ENCODE measurements at regions of chr13 and their contacts with region 1.

Region 1: DNA sequence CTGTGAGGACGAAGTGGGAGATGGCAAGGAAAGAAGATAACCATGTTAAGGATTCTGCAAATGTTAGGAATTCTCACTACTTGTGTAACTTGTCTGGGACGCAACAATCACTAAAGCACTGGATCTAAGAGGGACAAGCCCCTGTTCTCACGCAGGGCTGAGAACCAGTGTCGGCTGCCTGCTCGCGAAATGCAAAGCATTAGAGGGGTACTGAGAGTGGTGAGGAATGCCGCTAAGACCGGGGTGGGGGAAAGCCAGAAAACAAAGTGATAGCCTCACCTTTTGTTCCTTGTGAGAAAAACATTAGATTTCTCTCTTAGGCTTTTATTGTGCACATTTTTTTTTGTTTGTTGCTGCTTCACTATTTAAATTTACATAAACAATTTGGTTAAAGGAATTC is 241.9 kb downstream of the ABCC4 start:
- DNase-seq: no peak
- ATAC-seq: no peak
- H3K4me3 ChIP-seq: no peak overlapping the region
- H3K4me3 Mint-ChIP-seq: no peak overlapping the region
- H3K27ac ChIP-seq: no peak overlapping the region
- H3K27ac Mint-ChIP-seq: no peak overlapping the region
- H3K4me1 ChIP-seq: no peaks in the 10 kb centered on the region
- H3K4me1 Mint-ChIP-seq: no peaks in the 10 kb centered on the region
- H3K27me3 ChIP-seq: no peaks in the 10 kb centered on the region
- H3K27me3 Mint-ChIP-seq: no peaks in the 10 kb centered on the region
- CTCF ChIP-seq: no peak

Region 2: GRCh38 chr13:94608586-94608985 is 450.7 kb before region 1 on chr13:
- CTCF ChIA-PET with region 1: no interaction called
- POLR2A ChIA-PET with region 1: no interaction called
- intact Hi-C with region 1: no loop called
- DNase-seq: no peak
- ATAC-seq: no peak
- H3K4me3 ChIP-seq: no peak overlapping the region
- H3K4me3 Mint-ChIP-seq: no peak overlapping the region
- H3K27ac ChIP-seq: no peak overlapping the region
- H3K27ac Mint-ChIP-seq: no peak overlapping the region
- H3K4me1 ChIP-seq: no peaks in the 10 kb centered on the region
- H3K4me1 Mint-ChIP-seq: peaks cover 25% of the 10 kb centered on the region
- H3K27me3 ChIP-seq: no peaks in the 10 kb centered on the region
- H3K27me3 Mint-ChIP-seq: no peaks in the 10 kb centered on the region
- CTCF ChIP-seq: no peak

Region 3: GRCh38 chr13:94753327-94753726 is 306.0 kb before region 1 on chr13:
- CTCF ChIA-PET with region 1: no interaction called
- POLR2A ChIA-PET with region 1: no interaction called
- intact Hi-C with region 1: no loop called
- DNase-seq: no peak
- ATAC-seq: no peak
- H3K4me3 ChIP-seq: no peak overlapping the region
- H3K4me3 Mint-ChIP-seq: no peak overlapping the region
- H3K27ac ChIP-seq: no peak overlapping the region
- H3K27ac Mint-ChIP-seq: no peak overlapping the region
- H3K4me1 ChIP-seq: no peaks in the 10 kb centered on the region
- H3K4me1 Mint-ChIP-seq: no peaks in the 10 kb centered on the region
- H3K27me3 ChIP-seq: no peaks in the 10 kb centered on the region
- H3K27me3 Mint-ChIP-seq: peaks cover 9% of the 10 kb centered on the region
- CTCF ChIP-seq: no peak

Region 4: GRCh38 chr13:95039415-95039814 is 19.9 kb before region 1 on chr13:
- CTCF ChIA-PET with region 1: no interaction called
- POLR2A ChIA-PET with region 1: no interaction called
- intact Hi-C with region 1: loop called in 1 of 2 experiments (anchors 1 kb)
- DNase-seq: no peak
- ATAC-seq: no peak
- H3K4me3 ChIP-seq: no peak overlapping the region
- H3K4me3 Mint-ChIP-seq: no peak overlapping the region
- H3K27ac ChIP-seq: no peak overlapping the region
- H3K27ac Mint-ChIP-seq: no peak overlapping the region
- H3K4me1 ChIP-seq: no peaks in the 10 kb centered on the region
- H3K4me1 Mint-ChIP-seq: no peaks in the 10 kb centered on the region
- H3K27me3 ChIP-seq: no peaks in the 10 kb centered on the region
- H3K27me3 Mint-ChIP-seq: no peaks in the 10 kb centered on the region
- CTCF ChIP-seq: no peak

Region 5: DNA sequence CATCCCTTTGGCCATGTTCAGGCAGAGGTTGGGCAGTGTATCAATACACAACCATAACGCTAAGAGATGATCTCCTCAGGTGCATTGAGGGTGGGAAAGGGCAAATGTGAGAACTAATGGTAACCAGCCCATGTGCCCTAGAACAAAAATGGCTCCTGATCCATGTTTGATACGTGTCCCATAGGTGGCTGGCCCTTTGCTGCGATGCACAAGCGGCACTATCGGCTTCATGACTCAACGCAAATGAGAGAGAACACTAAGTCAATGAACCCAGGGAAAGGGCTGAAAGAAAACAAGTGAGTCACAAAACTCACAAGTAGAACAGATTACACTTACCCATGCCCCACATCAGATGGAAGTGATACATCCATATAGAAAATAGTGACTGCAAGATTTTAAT is 40.2 kb after region 1 on chr13:
- CTCF ChIA-PET with region 1: no interaction called
- POLR2A ChIA-PET with region 1: no interaction called
- intact Hi-C with region 1: no loop called
- DNase-seq: no peak
- ATAC-seq: no peak
- H3K4me3 ChIP-seq: no peak overlapping the region
- H3K4me3 Mint-ChIP-seq: no peak overlapping the region
- H3K27ac ChIP-seq: no peak overlapping the region
- H3K27ac Mint-ChIP-seq: no peak overlapping the region
- H3K4me1 ChIP-seq: no peaks in the 10 kb centered on the region
- H3K4me1 Mint-ChIP-seq: no peaks in the 10 kb centered on the region
- H3K27me3 ChIP-seq: no peaks in the 10 kb centered on the region
- H3K27me3 Mint-ChIP-seq: no peaks in the 10 kb centered on the region
- CTCF ChIP-seq: no peak

Region 6: DNA sequence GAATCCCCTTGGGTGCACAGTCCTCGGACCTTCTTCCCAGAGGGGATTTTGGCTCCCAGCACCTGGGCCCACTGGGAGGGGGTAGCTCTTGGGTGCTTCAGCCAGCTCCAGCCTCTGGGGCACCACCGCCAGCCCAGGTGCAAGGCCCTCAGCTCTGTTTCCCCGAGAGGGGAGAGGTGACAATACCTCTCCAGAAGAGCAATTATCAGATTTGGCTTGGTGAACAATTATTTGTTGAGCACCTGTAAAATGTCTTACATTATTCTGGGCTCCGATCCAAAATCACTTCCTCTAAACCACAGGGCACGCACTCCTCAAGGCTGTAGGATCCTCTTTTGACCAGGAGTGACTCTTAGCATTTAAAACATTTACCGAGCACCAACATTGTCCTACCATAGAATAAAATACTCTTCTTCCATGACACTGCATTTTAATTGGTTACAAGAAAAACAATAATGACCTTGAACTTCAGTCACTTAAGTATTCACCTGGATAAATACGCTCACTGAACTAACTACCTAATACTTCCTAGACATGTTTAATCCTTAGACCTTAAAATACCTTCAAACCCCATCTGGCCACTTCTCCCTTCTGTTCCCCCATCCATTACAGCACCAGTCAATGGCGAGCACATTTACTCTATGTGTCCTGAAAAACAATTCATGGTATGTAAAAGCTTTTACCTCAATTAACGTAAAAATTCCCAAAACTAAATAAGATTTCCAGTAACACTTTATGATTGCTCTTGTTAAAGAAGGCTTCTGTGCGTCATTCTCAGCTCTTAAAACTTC is 187.2 kb after region 1 on chr13:
- CTCF ChIA-PET with region 1: no interaction called
- POLR2A ChIA-PET with region 1: no interaction called
- intact Hi-C with region 1: no loop called
- DNase-seq: no peak
- ATAC-seq: no peak
- H3K4me3 ChIP-seq: no peak overlapping the region
- H3K4me3 Mint-ChIP-seq: no peak overlapping the region
- H3K27ac ChIP-seq: no peak overlapping the region
- H3K27ac Mint-ChIP-seq: no peak overlapping the region
- H3K4me1 ChIP-seq: no peaks in the 10 kb centered on the region
- H3K4me1 Mint-ChIP-seq: no peaks in the 10 kb centered on the region
- H3K27me3 ChIP-seq: no peaks in the 10 kb centered on the region
- H3K27me3 Mint-ChIP-seq: no peaks in the 10 kb centered on the region
- CTCF ChIP-seq: no peak